Heart right ventricle (tissue), 16 donors: ENCODE measurements at regions of chr2 and their contacts with region 1.

Region 1: DNA sequence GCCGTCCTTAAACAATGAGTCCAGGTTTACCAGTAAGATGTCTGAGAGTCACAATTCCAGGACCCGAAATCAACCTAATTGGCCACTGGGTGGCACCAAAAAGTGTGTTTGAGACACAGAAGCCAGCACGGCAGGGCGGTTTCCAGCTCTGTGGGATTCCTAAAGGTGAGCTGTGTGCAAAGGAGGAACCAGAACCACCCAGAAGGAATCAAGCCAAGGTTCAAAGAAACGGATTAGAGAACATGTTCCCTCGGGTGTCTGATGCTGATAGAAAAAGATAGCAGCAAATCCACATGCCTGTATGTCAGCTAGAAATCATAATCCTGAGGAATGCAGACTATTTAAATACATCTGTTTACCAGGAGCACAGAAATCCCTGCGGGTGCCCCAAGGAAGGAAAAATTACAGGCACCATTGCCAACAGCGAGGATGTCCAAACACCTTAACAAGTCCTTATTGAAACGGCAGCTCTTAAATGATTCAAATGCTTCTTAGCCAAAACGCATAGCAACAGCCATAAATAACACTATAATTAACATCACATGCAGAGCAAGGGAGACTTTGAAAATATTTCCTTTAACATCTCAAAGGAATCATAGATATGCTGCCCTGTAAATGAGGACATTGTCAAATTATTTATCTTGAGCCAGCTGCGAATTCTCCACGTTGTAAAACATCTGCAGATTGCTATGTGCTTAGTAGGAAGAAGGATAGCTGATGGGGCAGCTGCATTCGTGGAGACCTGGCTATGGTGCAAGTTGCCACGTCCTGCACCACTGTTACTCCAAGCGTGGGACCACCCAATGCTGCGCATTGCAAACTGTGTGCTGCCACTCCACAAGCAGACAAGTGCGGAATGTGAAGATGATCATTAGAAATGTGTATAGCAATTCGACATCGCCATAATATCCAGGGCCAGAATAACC is 318.7 kb upstream of the NCKAP5 start:
- DNase-seq: peak; percentile 51 to 68
- ATAC-seq: peak; percentile 57 to 89 (median 80)
- H3K4me3 ChIP-seq: no peak overlapping the region
- H3K27ac ChIP-seq: no peak overlapping the region
- H3K4me1 ChIP-seq: peaks cover 0 to 16% (median 10%) of the 10 kb centered on the region in 9 donors
- H3K27me3 ChIP-seq: peaks cover 0 to 5% (median 0%) of the 10 kb centered on the region in 7 donors
- CTCF ChIP-seq: peak; percentile 29 to 74 (median 62)

Region 2: DNA sequence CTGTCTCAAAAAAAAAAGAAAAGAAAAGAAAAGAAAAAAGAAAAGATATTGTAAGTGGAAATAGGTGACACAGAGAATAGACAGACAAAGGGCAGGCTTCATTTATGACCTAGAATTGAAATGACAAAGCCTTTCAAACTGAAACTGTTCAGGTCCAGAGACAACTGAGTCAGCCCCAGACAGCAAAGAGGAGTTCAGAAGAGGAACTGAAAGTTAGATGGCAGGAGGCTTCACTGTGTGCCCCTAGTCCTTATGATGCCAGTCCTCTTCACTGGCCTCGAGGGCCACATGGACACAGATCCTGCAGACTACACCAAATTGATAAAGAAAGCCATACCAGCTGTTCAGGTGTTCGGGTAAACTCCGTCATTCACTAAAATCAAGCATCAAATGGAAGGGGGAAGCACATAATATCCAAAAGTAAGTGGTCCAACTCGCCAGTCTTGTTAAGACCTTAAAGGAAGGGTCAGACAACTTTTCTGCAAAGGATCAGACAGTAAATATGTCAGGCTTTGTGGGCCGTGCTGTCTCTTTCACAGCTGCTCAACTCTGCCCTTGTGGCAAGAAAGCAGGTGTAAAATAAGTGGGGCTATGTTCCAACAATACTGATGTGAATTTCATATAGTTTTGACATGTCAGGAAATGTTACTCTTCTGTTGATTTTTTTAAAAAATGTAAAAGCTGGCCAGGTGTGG is 135.0 kb after region 1 on chr2:
- intact Hi-C with region 1: no loop called
- DNase-seq: no peak
- ATAC-seq: no peak
- H3K4me3 ChIP-seq: no peak overlapping the region
- H3K27ac ChIP-seq: no peak overlapping the region
- H3K4me1 ChIP-seq: peaks cover 0 to 6% (median 0%) of the 10 kb centered on the region in 9 donors
- H3K27me3 ChIP-seq: peaks cover 0 to 9% (median under 1%) of the 10 kb centered on the region in 7 donors
- CTCF ChIP-seq: no peak

Region 3: DNA sequence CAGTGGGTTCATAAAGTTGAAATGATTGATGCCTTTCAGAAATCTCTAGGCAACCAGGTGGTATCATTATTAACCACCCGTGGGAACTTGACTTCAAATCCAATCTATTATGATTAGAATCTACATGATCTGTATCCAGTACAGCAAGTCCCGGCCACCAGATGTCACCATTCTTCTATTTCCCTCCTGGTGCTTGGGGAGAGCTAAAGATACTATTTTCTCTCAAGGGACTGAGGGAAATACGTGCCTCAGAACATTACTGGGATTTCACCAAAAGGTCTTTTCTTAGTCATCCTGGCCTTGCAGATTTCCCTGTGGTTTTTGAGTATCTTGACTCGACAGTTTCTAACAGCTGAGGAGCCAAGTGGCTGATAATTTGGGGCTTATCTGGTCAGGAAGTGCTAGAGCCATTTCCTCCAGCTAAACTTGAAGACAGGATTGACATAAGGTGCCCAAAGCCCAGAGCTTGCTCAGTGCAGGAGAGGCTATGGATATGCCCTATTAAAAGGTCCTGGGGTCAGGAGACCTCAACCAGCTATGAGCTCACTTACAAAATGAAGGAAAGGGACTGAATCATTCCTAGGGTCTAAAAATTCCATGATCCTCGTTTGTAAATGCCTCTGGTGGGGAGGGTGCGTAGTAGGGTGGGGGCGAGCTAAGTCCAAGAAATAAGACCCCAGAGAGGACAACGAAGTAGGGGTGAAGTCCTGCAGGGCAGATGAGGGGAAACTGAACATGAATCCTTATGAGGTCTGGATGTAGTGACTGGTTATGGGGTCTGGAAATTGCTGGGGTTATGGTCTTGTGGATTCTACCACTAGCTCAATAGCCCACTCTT is 231.5 kb after region 1 on chr2:
- intact Hi-C with region 1: loop called in 9 of 10 experiments (anchors 2 to 10 kb)
- DNase-seq: peak; percentile 70 to 91
- ATAC-seq: peak; percentile 45 to 81 (median 61)
- H3K4me3 ChIP-seq: peak overlapping the region in 3 of 10 donors; percentile 1 to 8 (median 2)
- H3K27ac ChIP-seq: peak overlapping the region in 8 of 10 donors; percentile 92 to 98 (median 95)
- H3K4me1 ChIP-seq: peaks cover 4 to 45% (median 40%) of the 10 kb centered on the region in 9 donors
- H3K27me3 ChIP-seq: no peaks in the 10 kb centered on the region
- CTCF ChIP-seq: peak; percentile 48 to 93 (median 84)

Region 4: GRCh38 chr2:134245340-134245984 is 358.5 kb after region 1 on chr2:
- intact Hi-C with region 1: loop called in 5 of 10 experiments (anchors 5 to 10 kb)
- DNase-seq: peak; percentile 55 to 84
- ATAC-seq: peak in 7 of 8 donors; percentile 53 to 79 (median 68)
- H3K4me3 ChIP-seq: no peak overlapping the region
- H3K27ac ChIP-seq: peak overlapping the region in 2 of 10 donors; percentile 24 to 56
- H3K4me1 ChIP-seq: peaks cover 6 to 91% (median 70%) of the 10 kb centered on the region in 9 donors
- H3K27me3 ChIP-seq: no peaks in the 10 kb centered on the region
- CTCF ChIP-seq: peak; percentile 52 to 83 (median 78)

Region 5: DNA sequence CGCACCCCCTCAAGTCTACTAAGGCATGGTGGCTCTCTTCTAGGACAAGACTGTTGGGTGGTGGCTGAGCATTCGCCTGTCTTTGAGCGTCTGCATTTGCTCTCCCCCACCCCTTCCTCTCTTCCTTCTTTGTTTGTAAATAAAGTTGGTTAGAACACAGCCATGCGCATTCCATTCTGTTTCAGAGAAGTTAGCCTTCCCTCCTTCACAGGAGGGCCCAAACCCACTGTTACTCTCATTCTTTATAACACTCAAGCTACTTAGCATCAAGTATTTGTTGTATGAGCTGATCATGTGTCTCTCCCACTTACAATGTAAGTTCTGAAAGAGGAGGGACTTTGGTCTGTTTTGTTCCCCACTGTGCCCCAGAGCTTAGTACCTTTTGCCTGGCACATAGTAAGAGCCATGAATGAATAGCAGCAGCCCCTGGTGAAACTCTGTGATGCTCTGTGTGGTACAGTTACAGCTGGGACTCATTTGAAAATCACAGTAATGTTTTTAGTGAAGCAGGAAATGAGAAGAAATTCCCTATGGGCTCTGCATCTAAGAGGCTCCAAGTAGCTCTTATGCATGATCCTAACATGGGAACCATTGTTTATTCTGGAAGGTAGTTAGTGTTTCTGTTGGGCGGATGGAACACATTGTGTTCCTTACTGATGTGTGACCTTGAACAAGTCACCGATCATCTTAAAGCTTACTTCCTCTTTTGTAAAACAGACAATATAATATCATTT is 374.6 kb after region 1 on chr2:
- intact Hi-C with region 1: loop called in 2 of 10 experiments (anchors 10 kb)
- DNase-seq: no peak
- ATAC-seq: peak in 7 of 8 donors; percentile 25 to 73 (median 63)
- H3K4me3 ChIP-seq: no peak overlapping the region
- H3K27ac ChIP-seq: peak overlapping the region; percentile 45 to 82 (median 78)
- H3K4me1 ChIP-seq: peaks cover 33 to 75% (median 63%) of the 10 kb centered on the region in 9 donors
- H3K27me3 ChIP-seq: no peaks in the 10 kb centered on the region
- CTCF ChIP-seq: no peak

Region 6: GRCh38 chr2:134411828-134412638 is 525.0 kb after region 1 on chr2:
- intact Hi-C with region 1: loop called in 8 of 10 experiments (anchors 5 to 10 kb)
- DNase-seq: peak; percentile 37 to 82
- ATAC-seq: peak; percentile 88 to 98 (median 96)
- H3K4me3 ChIP-seq: no peak overlapping the region
- H3K27ac ChIP-seq: peak overlapping the region in 8 of 10 donors; percentile 20 to 70 (median 49)
- H3K4me1 ChIP-seq: peaks cover 12 to 53% (median 44%) of the 10 kb centered on the region in 9 donors
- H3K27me3 ChIP-seq: no peaks in the 10 kb centered on the region
- CTCF ChIP-seq: peak; percentile 40 to 85 (median 74)

Region 7: GRCh38 chr2:134454931-134455330 is 567.9 kb after region 1 on chr2:
- intact Hi-C with region 1: loop called in 4 of 10 experiments (anchors 5 to 10 kb)
- DNase-seq: no peak
- ATAC-seq: peak in 1 of 8 donors; percentile 15
- H3K4me3 ChIP-seq: no peak overlapping the region
- H3K27ac ChIP-seq: no peak overlapping the region
- H3K4me1 ChIP-seq: peaks cover 0 to 16% (median 0%) of the 10 kb centered on the region in 9 donors
- H3K27me3 ChIP-seq: no peaks in the 10 kb centered on the region
- CTCF ChIP-seq: no peak

Region 8: DNA sequence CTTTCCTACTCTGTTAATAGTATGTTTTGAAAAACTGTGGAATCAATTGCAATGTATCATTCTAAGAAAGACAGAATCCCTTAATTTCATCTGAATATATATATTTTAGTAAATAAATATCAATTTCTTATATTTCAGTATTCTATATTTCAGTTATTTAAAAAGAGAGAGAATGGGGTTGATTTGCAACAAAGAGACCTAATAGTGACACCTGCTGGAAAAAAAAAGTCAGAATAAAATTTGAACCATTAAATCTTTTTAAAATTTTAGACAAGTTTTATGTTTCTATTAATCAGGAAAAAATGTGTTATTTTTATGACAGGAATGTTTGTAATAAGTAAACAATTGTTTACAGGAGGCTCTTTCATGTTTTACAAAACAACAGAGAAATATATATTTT is 1010.9 kb after region 1 on chr2:
- intact Hi-C with region 1: loop called in 1 of 10 experiments (anchors 10 kb)
- DNase-seq: no peak
- ATAC-seq: no peak
- H3K4me3 ChIP-seq: no peak overlapping the region
- H3K27ac ChIP-seq: no peak overlapping the region
- H3K4me1 ChIP-seq: no peaks in the 10 kb centered on the region
- H3K27me3 ChIP-seq: no peaks in the 10 kb centered on the region
- CTCF ChIP-seq: peak in 8 of 9 donors; percentile 14 to 71 (median 55)